ENCODE measurements at regions of chr4 and their contacts with region 1.

Region 1: DNA sequence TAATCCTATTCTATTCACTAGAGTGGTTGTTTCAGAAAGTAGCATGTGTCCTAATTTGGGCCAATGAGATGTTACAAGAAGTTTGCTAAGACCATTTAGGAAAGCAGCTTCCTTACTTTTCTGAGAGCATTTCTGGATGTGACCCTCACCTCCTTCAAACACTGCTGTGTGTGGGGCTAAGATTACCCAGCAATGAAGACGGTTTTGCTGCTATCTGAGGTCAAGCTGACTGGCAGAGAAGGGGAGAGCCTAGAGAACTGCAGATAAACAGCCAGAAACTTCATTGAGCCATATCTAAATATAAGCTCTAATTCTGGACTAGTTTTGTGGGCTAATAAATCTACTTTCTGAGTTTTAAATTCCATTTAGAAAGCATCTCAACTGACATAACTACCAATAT is 36.4 kb downstream of the ZAR1 start:
- H3K4me3 Mint-ChIP-seq: no peak overlapping the region
- H3K27ac Mint-ChIP-seq: no peak overlapping the region
- H3K4me1 Mint-ChIP-seq: no peaks in the 10 kb centered on the region
- H3K27me3 Mint-ChIP-seq: no peaks in the 10 kb centered on the region

Region 2: DNA sequence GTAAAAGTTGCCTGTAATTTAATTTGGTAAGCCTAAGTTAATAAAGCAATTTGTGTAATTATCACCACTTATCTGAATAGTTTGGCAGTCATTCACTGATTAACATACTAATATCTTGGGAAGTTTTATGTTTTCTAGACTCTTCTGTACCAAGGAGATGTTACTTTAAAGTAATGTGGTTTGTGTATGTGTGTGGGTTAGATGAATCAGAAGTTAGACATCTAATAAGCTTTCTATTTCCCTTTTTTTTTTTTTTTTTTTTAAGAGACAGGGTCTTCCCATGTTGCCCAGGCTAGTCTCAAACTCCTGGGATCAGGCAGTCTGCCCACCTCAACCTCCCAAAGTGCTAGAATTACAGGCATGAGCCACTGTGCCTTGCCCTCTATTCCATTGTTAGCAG is 179.8 kb before region 1 on chr4:
- intact Hi-C with region 1: no loop called
- H3K4me3 Mint-ChIP-seq: no peak overlapping the region
- H3K27ac Mint-ChIP-seq: no peak overlapping the region
- H3K4me1 Mint-ChIP-seq: peaks cover 75% of the 10 kb centered on the region
- H3K27me3 Mint-ChIP-seq: no peaks in the 10 kb centered on the region

Region 3: GRCh38 chr4:48565362-48566033 is 39.1 kb after region 1 on chr4:
- intact Hi-C with region 1: loop called (anchors 5 kb)
- H3K4me3 Mint-ChIP-seq: no peak overlapping the region
- H3K27ac Mint-ChIP-seq: no peak overlapping the region
- H3K4me1 Mint-ChIP-seq: no peaks in the 10 kb centered on the region
- H3K27me3 Mint-ChIP-seq: no peaks in the 10 kb centered on the region

Measured in dendritic cell treated with granulocyte-macrophage colony-stimulating factor and Interleukin-4, amounts not matched to agents 40 ng/mL and 50 ng/mL, for 4 days (primary cell).